Activated CD4-positive, alpha-beta memory T cell treated with anti-CD3 and anti-CD28 coated beads for 36 hours (primary cell): ENCODE measurements at regions of chr2 and their contacts with region 1.

Region 1: GRCh38 chr2:64750817-64751285 is 97.1 kb upstream of the SERTAD2 start:
- DNase-seq: peak; percentile 99
- H3K4me3 Mint-ChIP-seq: peak overlapping the region; percentile 95
- H3K27ac Mint-ChIP-seq: peak overlapping the region; percentile 89
- H3K4me1 Mint-ChIP-seq: peaks cover 22% of the 10 kb centered on the region
- H3K27me3 Mint-ChIP-seq: no peaks in the 10 kb centered on the region

Region 2: GRCh38 chr2:64609227-64609941 is 141.5 kb before region 1 on chr2:
- CTCF ChIA-PET with region 1: interaction called, 5 read pairs
- POLR2A ChIA-PET with region 1: no interaction called
- intact Hi-C with region 1: loop called (anchors 2 kb)
- DNase-seq: peak; percentile 75
- H3K4me3 Mint-ChIP-seq: peak overlapping the region; percentile 57
- H3K27ac Mint-ChIP-seq: no peak overlapping the region
- H3K4me1 Mint-ChIP-seq: peaks cover 26% of the 10 kb centered on the region
- H3K27me3 Mint-ChIP-seq: no peaks in the 10 kb centered on the region

Region 3: GRCh38 chr2:64675860-64676259 is 75.0 kb before region 1 on chr2:
- CTCF ChIA-PET with region 1: interaction called, 3 read pairs
- POLR2A ChIA-PET with region 1: no interaction called
- intact Hi-C with region 1: loop called (anchors 2 kb)
- DNase-seq: peak; percentile 87
- H3K4me3 Mint-ChIP-seq: no peak overlapping the region
- H3K27ac Mint-ChIP-seq: no peak overlapping the region
- H3K4me1 Mint-ChIP-seq: peaks cover 25% of the 10 kb centered on the region
- H3K27me3 Mint-ChIP-seq: no peaks in the 10 kb centered on the region

Region 4: GRCh38 chr2:64737547-64737946 is 13.3 kb before region 1 on chr2:
- CTCF ChIA-PET with region 1: interaction called, 8 read pairs
- POLR2A ChIA-PET with region 1: interaction called, 5 read pairs
- intact Hi-C with region 1: loop called (anchors 1 kb)
- DNase-seq: no peak
- H3K4me3 Mint-ChIP-seq: no peak overlapping the region
- H3K27ac Mint-ChIP-seq: no peak overlapping the region
- H3K4me1 Mint-ChIP-seq: peaks cover 16% of the 10 kb centered on the region
- H3K27me3 Mint-ChIP-seq: no peaks in the 10 kb centered on the region

Region 5: GRCh38 chr2:64831134-64831976 is 80.5 kb after region 1 on chr2:
- CTCF ChIA-PET with region 1: interaction called, 22 read pairs
- POLR2A ChIA-PET with region 1: no interaction called
- intact Hi-C with region 1: loop called (anchors 1 kb)
- DNase-seq: peak; percentile 97
- H3K4me3 Mint-ChIP-seq: peak overlapping the region; percentile 57
- H3K27ac Mint-ChIP-seq: peak overlapping the region; percentile 86
- H3K4me1 Mint-ChIP-seq: peaks cover 11% of the 10 kb centered on the region
- H3K27me3 Mint-ChIP-seq: no peaks in the 10 kb centered on the region

Region 6: DNA sequence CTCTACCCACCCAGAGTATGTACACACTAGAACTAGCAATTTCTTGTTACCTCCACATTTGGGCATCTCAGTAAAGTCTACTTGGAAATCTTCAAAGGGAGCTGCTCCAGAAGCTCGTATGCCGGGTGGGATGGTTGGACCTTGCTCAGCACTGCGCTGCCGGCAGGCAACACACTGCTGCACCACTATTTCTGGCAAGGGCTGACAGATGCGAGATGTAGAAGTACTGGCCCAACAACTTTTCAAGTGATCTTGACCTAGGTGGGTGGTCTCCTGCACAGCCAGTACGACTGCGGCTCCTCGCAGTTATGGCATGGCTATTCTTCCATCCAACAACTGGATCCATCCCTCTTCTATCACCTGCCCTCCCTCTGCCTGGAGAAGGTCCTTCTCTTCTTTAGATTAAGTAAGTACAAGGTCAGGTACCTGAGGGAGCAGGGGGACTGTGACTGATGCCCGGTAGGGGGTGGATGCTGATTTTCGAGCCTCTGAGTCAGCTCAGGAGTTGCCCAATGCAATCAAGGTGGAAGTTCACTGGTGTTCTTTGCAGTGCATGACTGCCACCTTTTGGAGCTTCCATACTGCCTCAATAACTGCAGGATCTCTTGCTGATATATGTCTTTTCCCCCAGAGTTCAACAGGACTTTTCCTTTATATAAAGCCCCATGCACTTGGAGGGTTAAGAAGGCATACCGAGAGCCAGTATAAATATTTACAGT is 137.9 kb after region 1 on chr2:
- CTCF ChIA-PET with region 1: no interaction called
- POLR2A ChIA-PET with region 1: no interaction called
- intact Hi-C with region 1: no loop called
- DNase-seq: no peak
- H3K4me3 Mint-ChIP-seq: no peak overlapping the region
- H3K27ac Mint-ChIP-seq: no peak overlapping the region
- H3K4me1 Mint-ChIP-seq: no peaks in the 10 kb centered on the region
- H3K27me3 Mint-ChIP-seq: peaks cover 2% of the 10 kb centered on the region

Region 7: DNA sequence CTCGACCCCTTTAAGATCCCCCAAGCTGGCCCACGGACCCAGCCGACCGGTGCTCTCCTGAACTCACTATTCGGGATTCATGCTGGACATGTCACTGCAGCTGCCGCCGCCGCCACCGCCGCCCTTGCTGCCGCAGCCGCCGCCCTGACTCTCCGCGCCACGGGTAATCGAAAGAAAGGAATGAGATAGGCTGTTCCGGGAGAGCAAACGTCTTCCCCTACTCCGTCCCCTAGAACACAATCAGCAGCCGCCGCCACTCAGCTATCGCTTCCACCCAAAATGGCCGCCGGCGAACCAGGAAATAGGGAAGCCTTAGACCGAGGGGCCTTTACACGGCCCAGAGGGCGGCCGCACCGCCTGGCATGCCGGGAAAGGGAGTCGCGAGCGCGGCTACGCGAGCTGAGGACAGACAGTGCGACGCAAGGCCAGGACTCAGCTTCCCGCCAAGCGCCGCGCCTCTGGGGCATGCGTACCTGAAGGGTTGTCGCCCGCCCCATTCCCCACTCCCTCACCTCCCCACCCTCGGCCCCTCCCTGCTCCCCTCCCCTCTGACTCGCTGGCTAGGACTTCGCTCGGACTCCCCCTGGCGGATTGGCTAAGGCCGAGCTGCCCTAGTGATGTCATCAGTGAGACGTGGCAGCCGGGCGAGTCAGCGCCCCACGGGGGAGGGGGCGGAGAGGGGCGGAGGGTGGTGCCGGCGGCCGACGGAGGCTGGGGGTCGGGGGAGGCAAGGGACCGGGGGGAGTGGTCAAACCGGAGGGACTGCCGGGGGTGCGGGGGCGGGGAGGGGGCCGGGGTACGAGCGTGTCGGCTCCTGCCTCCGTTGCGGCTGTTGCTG is 379.2 kb after region 1 on chr2 and contains the start of gene RAB1A:
- CTCF ChIA-PET with region 1: no interaction called
- POLR2A ChIA-PET with region 1: no interaction called
- intact Hi-C with region 1: loop called (anchors 1 kb)
- DNase-seq: peak; percentile 100
- H3K4me3 Mint-ChIP-seq: peak within 1 kb of the TSS; percentile 96
- H3K27ac Mint-ChIP-seq: peak within 1 kb of the TSS; percentile 95
- H3K4me1 Mint-ChIP-seq: peaks cover 34% of the 10 kb centered on the region
- H3K27me3 Mint-ChIP-seq: no peaks in the 10 kb centered on the region
- total RNA-seq, gene RAB1A: 84.3 to 84.5 TPM